B cell (primary cell): ENCODE measurements at regions of chr12 and their contacts with region 1.

Region 1: DNA sequence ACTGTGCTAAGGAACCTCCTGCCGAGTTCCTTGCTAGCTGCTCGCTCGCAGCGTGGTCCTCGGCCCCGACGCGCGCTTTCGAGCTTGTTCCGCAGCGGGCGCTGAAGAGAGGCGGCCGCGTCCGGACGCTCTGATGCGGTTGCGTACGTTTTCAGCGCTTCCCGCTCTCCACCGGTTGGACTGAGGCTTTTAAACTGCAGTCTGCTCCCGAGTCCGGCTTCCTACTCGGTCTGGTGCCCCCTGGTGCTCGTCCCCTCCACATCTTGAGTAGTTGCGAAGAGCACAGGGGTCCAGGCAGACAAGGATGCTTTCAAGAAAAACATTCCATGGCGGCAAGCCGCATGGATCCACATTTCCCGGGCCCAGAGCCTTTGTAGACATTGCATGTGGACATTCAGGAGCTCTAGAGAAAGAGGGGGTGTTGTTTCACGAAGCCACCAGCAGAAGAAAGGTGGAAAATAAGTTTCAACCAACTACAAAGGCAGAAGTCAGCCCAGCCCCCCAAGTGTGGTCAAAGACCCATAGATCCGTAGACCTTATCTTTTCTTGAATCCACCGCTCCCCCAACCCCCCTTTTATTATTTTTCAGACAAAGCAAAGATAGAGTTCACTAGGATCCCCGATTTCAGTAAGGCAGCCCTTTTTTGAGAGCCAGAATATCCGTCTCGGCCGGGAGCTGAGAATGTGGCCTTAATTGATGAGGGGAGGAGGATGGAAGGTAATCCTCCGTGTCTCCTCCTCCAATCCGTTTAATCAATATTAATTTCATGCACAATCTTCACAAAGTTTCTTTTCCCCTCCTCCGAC is 984 bp upstream of the WNK1 start:
- DNase-seq: peak; percentile 94
- ATAC-seq: peak; percentile 47
- H3K4me3 ChIP-seq: peak overlapping the region; percentile 54 to 92 (median 87)
- H3K4me3 Mint-ChIP-seq: no peak overlapping the region
- H3K27ac ChIP-seq: peak overlapping the region; percentile 86 to 90
- H3K27ac Mint-ChIP-seq: no peak overlapping the region
- H3K4me1 ChIP-seq: peaks cover 23 to 25% of the 10 kb centered on the region in 2 donors
- H3K4me1 Mint-ChIP-seq: peaks cover 27% of the 10 kb centered on the region
- H3K27me3 ChIP-seq: no peaks in the 10 kb centered on the region
- H3K27me3 Mint-ChIP-seq: no peaks in the 10 kb centered on the region
- CTCF ChIP-seq: peak; percentile 60

Region 2: DNA sequence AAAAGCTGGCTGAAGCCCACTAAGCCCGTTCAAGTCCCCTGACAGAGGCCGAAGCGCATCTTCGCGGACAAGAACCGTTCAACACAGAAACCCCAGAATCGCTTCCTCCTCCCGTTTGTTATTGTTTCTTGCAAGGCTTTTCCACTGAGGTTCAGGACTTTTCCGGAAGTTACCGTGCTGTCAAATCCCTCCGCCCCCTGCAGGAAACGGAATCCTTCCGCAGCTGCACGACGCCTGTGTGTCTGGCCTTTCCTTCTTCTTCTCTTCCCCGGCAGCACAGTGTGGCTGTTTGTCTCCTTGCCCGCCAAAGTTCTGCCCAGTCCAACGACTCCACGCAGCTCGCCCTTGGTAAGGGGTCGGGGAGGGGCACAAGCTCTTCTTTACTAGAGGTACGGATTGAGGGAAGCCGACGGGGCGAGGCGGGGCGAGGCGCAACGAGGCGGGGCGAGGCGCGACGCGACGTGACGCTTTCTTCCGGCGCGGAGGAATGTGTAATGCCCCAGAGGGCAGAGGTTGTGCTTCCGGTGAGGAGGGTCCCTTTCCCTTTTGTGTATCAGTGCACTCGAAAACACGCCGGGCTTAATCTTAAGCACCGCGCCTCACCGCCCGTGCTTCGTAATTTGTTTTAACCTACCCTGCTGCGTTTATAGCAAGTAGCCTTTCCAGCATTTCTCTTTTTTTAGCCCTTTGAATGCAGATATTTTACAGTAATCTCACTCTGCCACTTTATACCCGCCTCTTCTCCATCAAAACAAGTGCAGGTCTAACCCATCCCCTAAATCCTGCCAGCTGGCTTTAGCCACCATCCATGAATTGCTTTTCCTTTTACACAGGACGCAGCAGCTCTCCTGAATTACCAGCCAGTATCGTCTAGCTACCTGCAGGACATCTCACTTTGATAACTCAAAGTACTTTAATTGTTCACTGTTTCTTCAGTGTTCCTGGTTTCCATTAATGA is 362.0 kb before region 1 on chr12 and contains the start of gene KDM5A:
- CTCF ChIA-PET with region 1: no interaction called
- POLR2A ChIA-PET with region 1: no interaction called
- intact Hi-C with region 1: loop called (anchors 2 kb)
- DNase-seq: peak; percentile 98
- ATAC-seq: peak; percentile 93
- H3K4me3 ChIP-seq: peak within 1 kb of the TSS; percentile 81 to 99 (median 98)
- H3K4me3 Mint-ChIP-seq: peak within 1 kb of the TSS; percentile 98
- H3K27ac ChIP-seq: peak within 1 kb of the TSS; percentile 90 to 93
- H3K27ac Mint-ChIP-seq: peak within 1 kb of the TSS; percentile 99
- H3K4me1 ChIP-seq: peaks cover 27 to 28% of the 10 kb centered on the region in 2 donors
- H3K4me1 Mint-ChIP-seq: peaks cover 40% of the 10 kb centered on the region
- H3K27me3 ChIP-seq: no peaks in the 10 kb centered on the region
- H3K27me3 Mint-ChIP-seq: no peaks in the 10 kb centered on the region
- CTCF ChIP-seq: no peak
- total RNA-seq, gene KDM5A: 171 and 175 TPM in 2 replicates

Region 3: GRCh38 chr12:622416-622815 is 129.0 kb before region 1 on chr12:
- CTCF ChIA-PET with region 1: interaction called, 96 read pairs
- POLR2A ChIA-PET with region 1: interaction called, 5 read pairs
- intact Hi-C with region 1: no loop called
- DNase-seq: no peak
- ATAC-seq: no peak
- H3K4me3 ChIP-seq: no peak overlapping the region
- H3K4me3 Mint-ChIP-seq: no peak overlapping the region
- H3K27ac ChIP-seq: no peak overlapping the region
- H3K27ac Mint-ChIP-seq: peak overlapping the region; percentile 6
- H3K4me1 ChIP-seq: peaks cover 0 to 2% of the 10 kb centered on the region in 2 donors
- H3K4me1 Mint-ChIP-seq: peaks cover 3% of the 10 kb centered on the region
- H3K27me3 ChIP-seq: no peaks in the 10 kb centered on the region
- H3K27me3 Mint-ChIP-seq: no peaks in the 10 kb centered on the region
- CTCF ChIP-seq: no peak

Region 4: GRCh38 chr12:674272-674781 is 77.1 kb before region 1 on chr12:
- CTCF ChIA-PET with region 1: interaction called, 24 read pairs
- POLR2A ChIA-PET with region 1: interaction called, 8 read pairs
- intact Hi-C with region 1: loop called (anchors 2 kb)
- DNase-seq: peak; percentile 71
- ATAC-seq: peak; percentile 74
- H3K4me3 ChIP-seq: peak overlapping the region in 1 of 5 experiments; percentile 23
- H3K4me3 Mint-ChIP-seq: peak overlapping the region; percentile 87
- H3K27ac ChIP-seq: peak overlapping the region; percentile 74 to 77
- H3K27ac Mint-ChIP-seq: peak overlapping the region; percentile 90
- H3K4me1 ChIP-seq: peaks cover 26 to 39% of the 10 kb centered on the region in 2 donors
- H3K4me1 Mint-ChIP-seq: peaks cover 45% of the 10 kb centered on the region
- H3K27me3 ChIP-seq: no peaks in the 10 kb centered on the region
- H3K27me3 Mint-ChIP-seq: no peaks in the 10 kb centered on the region
- CTCF ChIP-seq: no peak

Region 5: DNA sequence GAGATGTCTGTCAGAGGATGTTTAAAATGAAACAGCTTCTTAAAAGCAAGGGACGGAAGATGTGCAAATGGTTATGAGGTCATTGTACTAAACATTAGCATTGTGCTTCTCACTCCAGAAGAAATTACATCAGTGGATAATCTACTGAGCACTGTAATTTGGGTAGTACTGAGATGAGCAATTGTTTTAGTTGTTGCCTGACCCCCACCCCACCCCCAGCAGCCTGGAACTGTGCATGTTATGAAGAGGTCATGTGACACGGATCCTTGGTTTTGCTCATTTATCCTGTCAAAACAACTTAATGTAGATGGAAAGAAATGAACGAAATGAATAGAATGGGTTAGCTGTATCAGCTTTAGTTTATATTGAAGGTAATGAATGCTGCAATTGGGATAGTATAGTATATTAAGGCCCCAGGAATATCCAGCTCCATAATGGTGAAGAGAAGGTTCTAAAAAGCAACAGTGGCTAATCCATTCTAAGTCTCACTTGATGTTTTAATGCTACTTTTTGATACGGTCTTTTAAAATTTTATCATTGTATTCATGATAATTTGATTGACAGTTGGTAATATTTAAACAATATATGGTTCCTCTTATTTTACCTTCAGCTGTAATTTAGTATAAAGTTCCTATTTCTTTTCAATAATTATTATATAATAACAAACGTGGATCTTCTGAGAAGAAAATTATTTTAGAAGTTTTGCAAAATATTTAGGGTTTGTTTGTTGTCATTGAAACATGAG is 59.4 kb after region 1 on chr12:
- CTCF ChIA-PET with region 1: interaction called, 40 read pairs
- POLR2A ChIA-PET with region 1: interaction called, 11 read pairs
- intact Hi-C with region 1: loop called (anchors 1 kb)
- DNase-seq: no peak
- ATAC-seq: no peak
- H3K4me3 ChIP-seq: no peak overlapping the region
- H3K4me3 Mint-ChIP-seq: no peak overlapping the region
- H3K27ac ChIP-seq: peak overlapping the region in 1 of 2 donors; percentile 53
- H3K27ac Mint-ChIP-seq: peak overlapping the region; percentile 23
- H3K4me1 ChIP-seq: peaks cover 10 to 18% of the 10 kb centered on the region in 2 donors
- H3K4me1 Mint-ChIP-seq: peaks cover 42% of the 10 kb centered on the region
- H3K27me3 ChIP-seq: no peaks in the 10 kb centered on the region
- H3K27me3 Mint-ChIP-seq: no peaks in the 10 kb centered on the region
- CTCF ChIP-seq: no peak

Region 6: DNA sequence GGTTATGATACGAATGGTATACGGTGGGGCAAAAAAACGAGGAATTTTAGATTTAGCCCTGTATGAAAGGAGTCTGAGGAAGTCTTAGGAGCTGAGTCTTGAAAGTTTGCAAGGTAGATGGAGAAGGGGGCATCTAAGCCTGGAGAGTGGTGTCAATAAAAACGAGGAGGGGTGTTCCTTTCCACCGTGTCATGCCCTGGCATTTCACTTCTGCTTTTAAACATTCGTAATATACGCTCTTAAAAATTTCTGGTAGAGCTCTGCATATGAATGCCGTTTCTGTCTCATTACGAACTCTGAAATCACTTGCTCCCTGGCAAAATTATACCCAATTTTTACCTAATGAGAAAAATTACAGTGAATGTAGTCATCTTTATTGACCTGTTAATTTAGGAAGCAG is 409.8 kb after region 1 on chr12:
- CTCF ChIA-PET with region 1: no interaction called
- POLR2A ChIA-PET with region 1: interaction called, 11 read pairs
- intact Hi-C with region 1: no loop called
- DNase-seq: peak; percentile 41
- ATAC-seq: peak; percentile 69
- H3K4me3 ChIP-seq: peak overlapping the region in 2 of 5 experiments; percentile 13 to 48
- H3K4me3 Mint-ChIP-seq: peak overlapping the region; percentile 66
- H3K27ac ChIP-seq: no peak overlapping the region
- H3K27ac Mint-ChIP-seq: peak overlapping the region; percentile 2
- H3K4me1 ChIP-seq: peaks cover 5 to 8% of the 10 kb centered on the region in 2 donors
- H3K4me1 Mint-ChIP-seq: peaks cover 20% of the 10 kb centered on the region
- H3K27me3 ChIP-seq: no peaks in the 10 kb centered on the region
- H3K27me3 Mint-ChIP-seq: no peaks in the 10 kb centered on the region
- CTCF ChIP-seq: no peak